Activated CD4-positive, alpha-beta T cell treated with anti-CD3 and anti-CD28 coated beads for 36 hours (primary cell): ENCODE measurements at regions of chr7 and their contacts with region 1.

Region 1: GRCh38 chr7:135977007-135977741 is at the start of gene MTPN:
- DNase-seq: peak; percentile 98
- ATAC-seq: peak; percentile 87
- H3K4me3 Mint-ChIP-seq: peak within 1 kb of the TSS; percentile 99
- H3K27ac Mint-ChIP-seq: peak within 1 kb of the TSS; percentile 97
- H3K4me1 Mint-ChIP-seq: peaks cover 73% of the 10 kb centered on the region
- H3K27me3 Mint-ChIP-seq: no peaks in the 10 kb centered on the region
- total RNA-seq, gene MTPN: 123 to 136 TPM

Region 2: DNA sequence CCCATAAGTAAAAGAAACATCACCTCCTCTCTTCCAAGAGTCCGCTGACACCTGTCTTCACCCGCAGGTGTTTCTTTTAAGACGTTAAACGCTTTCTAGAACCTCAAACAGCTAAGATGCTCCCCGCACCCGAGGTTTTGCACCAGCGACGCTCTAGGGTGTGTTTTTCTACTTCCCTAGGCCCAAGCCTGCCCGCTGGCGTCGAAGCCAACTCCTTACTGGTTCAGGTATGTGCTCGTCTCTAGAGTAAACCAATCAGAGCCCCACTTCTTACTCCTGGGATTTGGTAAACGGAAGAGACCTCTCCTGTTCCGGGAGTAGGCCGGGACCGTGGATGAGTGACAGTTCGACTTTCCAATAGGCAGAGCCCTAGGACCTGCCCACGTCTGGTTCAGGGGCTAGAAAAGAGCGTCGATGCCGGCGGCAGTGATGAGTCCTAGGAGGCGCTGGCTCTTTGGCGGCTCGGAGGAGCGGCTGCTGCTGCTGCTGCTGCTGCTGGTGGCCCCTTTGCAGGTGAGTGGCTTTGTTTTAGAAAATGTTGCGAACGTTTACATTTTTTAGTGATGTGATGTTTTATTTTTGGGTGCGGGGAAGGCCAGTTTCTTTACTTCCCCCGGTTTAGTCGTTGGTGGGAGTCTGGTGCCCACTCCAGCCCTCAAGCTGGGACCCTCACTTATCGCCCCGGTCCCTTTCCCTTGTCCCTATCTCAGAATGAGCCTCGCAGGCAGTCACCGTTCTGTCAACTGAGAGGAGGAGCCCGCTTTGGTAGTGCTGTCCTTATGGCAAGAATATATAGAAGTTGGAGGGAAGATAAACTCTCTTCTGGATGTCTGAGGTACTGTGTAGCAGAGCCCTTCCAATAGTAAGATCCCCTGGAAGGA is 1330.5 kb before region 1 on chr7 and contains the start of gene BPGM:
- CTCF ChIA-PET with region 1: no interaction called
- POLR2A ChIA-PET with region 1: interaction called, 3 read pairs
- intact Hi-C with region 1: loop called in 1 of 2 experiments (anchors 2 kb)
- DNase-seq: peak; percentile 97
- ATAC-seq: peak; percentile 99
- H3K4me3 Mint-ChIP-seq: no peak within 1 kb of the TSS
- H3K27ac Mint-ChIP-seq: no peak within 1 kb of the TSS
- H3K4me1 Mint-ChIP-seq: peaks cover 44% of the 10 kb centered on the region
- H3K27me3 Mint-ChIP-seq: no peaks in the 10 kb centered on the region
- total RNA-seq, gene BPGM: 17.5 to 18.6 TPM

Region 3: GRCh38 chr7:135791543-135792362 is 185.4 kb before region 1 on chr7:
- CTCF ChIA-PET with region 1: no interaction called
- POLR2A ChIA-PET with region 1: no interaction called
- intact Hi-C with region 1: no loop called
- DNase-seq: no peak
- ATAC-seq: no peak
- H3K4me3 Mint-ChIP-seq: no peak overlapping the region
- H3K27ac Mint-ChIP-seq: no peak overlapping the region
- H3K4me1 Mint-ChIP-seq: no peaks in the 10 kb centered on the region
- H3K27me3 Mint-ChIP-seq: peaks cover 4% of the 10 kb centered on the region

Region 4: GRCh38 chr7:135933509-135934188 is 43.5 kb before region 1 on chr7:
- CTCF ChIA-PET with region 1: no interaction called
- POLR2A ChIA-PET with region 1: no interaction called
- intact Hi-C with region 1: loop called in 1 of 2 experiments (anchors 2 kb)
- DNase-seq: peak; percentile 5
- ATAC-seq: peak; percentile 56
- H3K4me3 Mint-ChIP-seq: no peak overlapping the region
- H3K27ac Mint-ChIP-seq: peak overlapping the region; percentile 58
- H3K4me1 Mint-ChIP-seq: peaks cover 40% of the 10 kb centered on the region
- H3K27me3 Mint-ChIP-seq: no peaks in the 10 kb centered on the region

Region 5: GRCh38 chr7:135993950-135994349 is 16.8 kb after region 1 on chr7:
- CTCF ChIA-PET with region 1: interaction called, 7 read pairs
- POLR2A ChIA-PET with region 1: interaction called, 3 read pairs
- intact Hi-C with region 1: loop called in 1 of 2 experiments (anchors 2 kb)
- DNase-seq: no peak
- ATAC-seq: peak; percentile 47
- H3K4me3 Mint-ChIP-seq: no peak overlapping the region
- H3K27ac Mint-ChIP-seq: no peak overlapping the region
- H3K4me1 Mint-ChIP-seq: peaks cover 9% of the 10 kb centered on the region
- H3K27me3 Mint-ChIP-seq: peaks cover 2% of the 10 kb centered on the region

Region 6: DNA sequence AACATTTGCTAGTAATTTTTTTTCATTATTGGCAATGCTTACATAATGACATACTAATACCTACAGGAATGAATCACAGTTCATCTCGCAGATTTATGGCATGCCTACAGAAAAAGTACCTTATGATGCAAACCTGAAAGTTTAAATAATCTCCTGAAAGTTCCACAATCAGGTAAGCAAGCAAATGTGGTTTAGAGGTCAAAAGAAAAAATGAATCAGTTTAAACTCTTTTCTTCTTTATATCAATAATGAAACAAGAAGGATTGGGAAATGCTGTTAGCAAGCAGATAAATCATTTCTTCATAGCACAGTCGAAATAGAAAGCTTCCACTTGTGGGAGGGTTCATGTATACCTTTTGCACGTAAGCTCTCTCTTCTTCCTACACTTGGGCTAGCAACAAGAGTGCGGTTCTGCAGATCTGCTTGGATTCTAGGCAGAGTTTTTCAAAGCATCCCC is 53.7 kb after region 1 on chr7:
- CTCF ChIA-PET with region 1: interaction called, 4 read pairs
- POLR2A ChIA-PET with region 1: no interaction called
- intact Hi-C with region 1: loop called (anchors 1 to 5 kb)
- DNase-seq: peak; percentile 37
- ATAC-seq: peak; percentile 83
- H3K4me3 Mint-ChIP-seq: peak overlapping the region; percentile 3
- H3K27ac Mint-ChIP-seq: peak overlapping the region; percentile 86
- H3K4me1 Mint-ChIP-seq: peaks cover 64% of the 10 kb centered on the region
- H3K27me3 Mint-ChIP-seq: peaks cover 13% of the 10 kb centered on the region

Region 7: GRCh38 chr7:136104269-136104603 is 127.1 kb after region 1 on chr7:
- CTCF ChIA-PET with region 1: no interaction called
- POLR2A ChIA-PET with region 1: no interaction called
- intact Hi-C with region 1: no loop called
- DNase-seq: no peak
- ATAC-seq: no peak
- H3K4me3 Mint-ChIP-seq: no peak overlapping the region
- H3K27ac Mint-ChIP-seq: no peak overlapping the region
- H3K4me1 Mint-ChIP-seq: no peaks in the 10 kb centered on the region
- H3K27me3 Mint-ChIP-seq: no peaks in the 10 kb centered on the region